ENCODE measurements at regions of chr12 and their contacts with region 1.

Region 1: DNA sequence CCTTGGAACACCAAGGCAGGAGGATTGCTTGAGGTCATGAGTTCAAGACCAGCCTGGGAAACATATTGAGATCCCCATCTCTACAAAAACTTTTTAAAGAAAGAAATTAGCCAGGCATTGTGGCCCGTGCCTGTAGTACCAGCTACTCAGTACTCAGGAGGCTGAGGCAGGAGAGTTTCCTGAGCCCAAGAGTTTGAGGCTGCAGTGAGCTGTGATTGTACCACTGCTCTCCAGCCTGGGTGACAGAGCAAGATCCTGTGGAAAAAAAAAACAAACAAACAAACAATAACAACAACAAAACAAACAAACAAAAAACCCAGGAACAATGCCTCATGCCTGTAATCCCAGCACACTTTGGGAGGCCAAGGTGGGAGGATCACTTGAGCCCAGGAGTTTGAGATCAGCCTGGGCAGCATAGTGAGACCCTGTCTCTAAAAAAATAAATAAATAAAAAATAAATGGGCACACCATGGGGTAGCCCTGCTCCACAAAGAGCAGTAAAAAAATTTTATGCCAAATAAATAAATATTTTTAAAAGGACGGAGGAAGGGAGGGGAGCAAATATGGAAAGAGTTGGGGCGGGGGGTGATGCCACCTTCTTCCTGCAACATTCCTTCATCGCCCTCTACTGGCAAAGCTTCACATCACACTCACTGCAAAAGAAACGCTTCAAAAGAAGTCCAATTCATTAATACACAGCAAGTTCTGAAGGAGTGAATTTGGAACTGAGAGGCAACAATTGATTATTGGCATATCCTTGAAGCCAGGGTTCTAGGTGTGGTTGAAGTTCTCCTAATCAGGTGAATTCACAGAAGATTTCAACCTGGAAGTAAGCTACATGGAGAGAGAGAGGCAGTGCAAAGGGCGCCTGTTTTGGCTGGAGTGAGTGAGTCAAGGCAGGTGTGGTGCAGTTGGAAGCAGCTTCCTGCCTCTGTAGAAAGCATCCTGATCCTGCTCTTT is 8.8 kb upstream of the GNPTAB start:
- DNase-seq: peak; percentile 70
- H3K4me3 ChIP-seq: no peak overlapping the region
- H3K27ac ChIP-seq: no peak overlapping the region
- H3K4me1 ChIP-seq: no peaks in the 10 kb centered on the region
- H3K27me3 ChIP-seq: no peaks in the 10 kb centered on the region
- CTCF ChIP-seq: peak; percentile 74 to 84 (median 74)
- POLR2A ChIP-seq: no peak

Region 2: GRCh38 chr12:101414533-101415119 is 425.0 kb before region 1 on chr12:
- intact Hi-C with region 1: loop called (anchors 5 kb)
- DNase-seq: peak; percentile 46
- H3K4me3 ChIP-seq: no peak overlapping the region
- H3K27ac ChIP-seq: no peak overlapping the region
- H3K4me1 ChIP-seq: no peaks in the 10 kb centered on the region
- H3K27me3 ChIP-seq: no peaks in the 10 kb centered on the region
- CTCF ChIP-seq: peak; percentile 31 to 76 (median 66)
- POLR2A ChIP-seq: no peak

Region 3: DNA sequence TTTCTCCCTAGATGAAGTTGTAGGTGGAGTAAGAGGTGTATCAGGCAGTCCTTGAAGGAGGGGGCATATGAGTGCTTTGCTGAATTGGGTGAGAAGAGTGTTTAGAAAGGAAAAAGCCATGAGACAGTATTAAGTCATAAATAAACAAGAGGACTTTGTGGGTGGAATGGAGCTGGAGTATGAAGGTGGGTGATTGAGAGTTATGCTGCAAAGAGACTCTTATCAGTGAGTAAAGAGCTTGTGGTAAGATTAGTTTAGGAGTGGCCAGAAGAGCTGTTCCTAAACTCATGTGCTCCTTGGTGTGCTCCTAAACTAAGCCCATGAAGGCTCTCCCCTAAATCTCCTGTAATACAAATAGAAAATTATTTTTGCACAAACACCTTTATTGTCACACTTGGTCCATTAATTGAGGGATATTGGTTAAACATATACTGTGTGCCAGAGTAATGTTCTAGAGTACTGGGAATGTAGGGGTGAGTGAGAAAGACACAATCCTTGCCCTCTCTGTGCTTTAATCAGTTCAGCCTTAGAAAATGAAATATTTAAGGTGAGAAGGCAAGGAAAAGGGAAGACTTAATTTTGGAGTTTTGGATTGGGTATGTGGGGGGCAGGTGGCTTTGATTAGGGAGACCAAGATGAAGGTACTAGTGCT is 132.3 kb before region 1 on chr12:
- intact Hi-C with region 1: no loop called
- DNase-seq: no peak
- H3K4me3 ChIP-seq: no peak overlapping the region
- H3K27ac ChIP-seq: no peak overlapping the region
- H3K4me1 ChIP-seq: no peaks in the 10 kb centered on the region
- H3K27me3 ChIP-seq: no peaks in the 10 kb centered on the region
- CTCF ChIP-seq: no peak
- POLR2A ChIP-seq: no peak

Region 4: DNA sequence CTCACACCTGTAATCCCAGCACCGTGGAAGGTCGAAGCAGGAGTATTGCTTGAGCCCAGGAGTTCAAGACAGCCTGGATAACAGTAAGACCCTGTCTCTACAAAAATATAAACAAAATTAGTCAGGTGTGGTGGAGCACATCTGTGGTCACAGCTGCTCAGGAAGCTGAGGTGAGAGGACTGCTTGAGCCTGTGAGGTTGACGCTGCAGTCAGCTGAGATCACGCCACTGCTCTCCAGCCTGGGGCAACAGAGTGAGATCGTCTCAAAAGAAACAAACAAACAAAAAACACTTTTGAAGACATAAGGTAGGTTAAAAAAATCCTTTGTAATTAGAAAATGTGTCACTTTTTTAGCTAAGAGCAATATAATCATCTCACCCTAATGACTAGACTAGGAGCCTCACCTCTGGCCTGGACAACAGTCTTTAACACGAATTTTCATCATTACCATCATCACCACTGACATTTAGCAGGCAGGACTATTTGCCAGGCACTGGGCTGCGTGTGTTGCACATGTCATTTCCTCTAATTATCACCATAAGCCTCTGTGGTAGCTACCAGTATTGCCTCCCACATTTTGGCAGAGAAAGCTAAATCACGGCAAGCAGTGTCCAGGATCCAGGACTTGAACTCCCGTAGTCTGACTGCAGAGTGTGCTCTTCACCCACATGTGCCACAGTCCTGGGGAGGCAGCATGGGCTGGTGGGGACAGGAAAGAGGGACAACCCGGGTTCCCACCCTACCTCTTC is 95.7 kb before region 1 on chr12:
- intact Hi-C with region 1: no loop called
- DNase-seq: no peak
- H3K4me3 ChIP-seq: no peak overlapping the region
- H3K27ac ChIP-seq: no peak overlapping the region
- H3K4me1 ChIP-seq: no peaks in the 10 kb centered on the region
- H3K27me3 ChIP-seq: no peaks in the 10 kb centered on the region
- CTCF ChIP-seq: no peak
- POLR2A ChIP-seq: no peak

Region 5: GRCh38 chr12:101773650-101774162 is 65.9 kb before region 1 on chr12:
- intact Hi-C with region 1: loop called (anchors 2 kb)
- DNase-seq: peak; percentile 52
- H3K4me3 ChIP-seq: no peak overlapping the region
- H3K27ac ChIP-seq: no peak overlapping the region
- H3K4me1 ChIP-seq: peaks cover 14% of the 10 kb centered on the region
- H3K27me3 ChIP-seq: no peaks in the 10 kb centered on the region
- CTCF ChIP-seq: peak; percentile 94 to 98 (median 96)
- POLR2A ChIP-seq: no peak